Colonic mucosa (tissue), 4 donors: ENCODE measurements at regions of chr17 and their contacts with region 1.

Region 1: DNA sequence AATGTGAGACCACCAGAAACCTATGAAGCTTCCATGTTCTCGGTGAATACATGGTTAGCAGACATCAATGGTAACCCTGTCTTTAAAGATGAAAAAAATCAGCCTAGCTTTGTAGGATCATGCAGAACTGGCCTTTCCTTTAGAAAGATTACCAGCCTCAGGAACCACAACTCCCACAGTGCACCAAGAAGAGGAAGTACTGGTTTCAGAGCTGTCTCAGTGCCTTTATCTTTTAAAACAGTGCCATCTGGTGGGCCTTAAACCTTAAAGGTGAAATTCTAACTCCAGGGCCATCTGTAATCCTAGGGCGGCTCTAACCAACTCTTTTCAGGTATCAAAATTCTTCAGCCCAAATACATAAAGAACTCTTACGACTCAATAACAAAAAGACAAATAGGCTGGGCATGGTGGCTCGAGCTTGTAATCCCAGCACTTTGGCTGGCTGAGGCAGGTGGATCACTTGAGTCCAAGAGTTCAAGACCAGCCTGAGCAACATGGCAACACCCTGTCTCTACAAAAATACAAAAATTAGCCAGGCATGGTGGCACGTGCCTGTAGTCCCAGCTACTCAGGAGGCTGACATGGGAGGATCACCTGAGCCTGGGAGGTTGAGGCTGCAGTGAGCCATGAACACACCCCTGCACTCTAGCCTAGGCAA is 5.4 kb downstream of the ATPAF2 start:
- DNase-seq: peak; percentile 67
- H3K4me3 ChIP-seq: no peak overlapping the region
- H3K27ac ChIP-seq: no peak overlapping the region
- H3K4me1 ChIP-seq: peaks cover 10% of the 10 kb centered on the region
- H3K27me3 ChIP-seq: no peaks in the 10 kb centered on the region
- CTCF ChIP-seq: peak; percentile 41

Region 2: GRCh38 chr17:17890773-17891759 is 142.5 kb before region 1 on chr17:
- intact Hi-C with region 1: loop called (anchors 2 kb)
- DNase-seq: peak; percentile 51
- H3K4me3 ChIP-seq: no peak overlapping the region
- H3K27ac ChIP-seq: no peak overlapping the region
- H3K4me1 ChIP-seq: no peaks in the 10 kb centered on the region
- H3K27me3 ChIP-seq: no peaks in the 10 kb centered on the region
- CTCF ChIP-seq: peak; percentile 69